Right ventricle myocardium inferior (tissue), 1 donor: ENCODE measurements at regions of chr6 and their contacts with region 1.

Region 1: GRCh38 chr6:124002377-124003081 is 198.9 kb downstream of the NKAIN2 start:
- DNase-seq: no peak
- ATAC-seq: peak; percentile 93

Region 2: DNA sequence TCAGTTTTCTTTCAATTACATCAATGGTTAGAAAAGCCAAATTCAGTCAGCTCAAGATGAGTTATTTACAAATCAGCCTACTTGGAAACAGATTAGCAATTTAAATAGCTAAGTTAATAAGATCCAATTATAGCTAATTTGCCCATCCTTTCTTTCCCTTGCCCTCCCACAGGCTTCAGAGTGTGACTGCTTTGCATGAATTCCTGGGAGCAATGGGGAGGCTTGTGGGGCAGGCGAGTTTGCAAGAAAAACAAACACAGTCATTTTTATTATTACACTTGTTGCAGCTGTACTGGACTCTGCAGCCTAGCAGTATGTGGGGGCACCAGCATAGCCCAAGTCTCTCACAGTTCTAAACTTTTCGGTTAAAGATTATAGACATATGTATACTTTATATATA is 20.1 kb after region 1 on chr6:
- intact Hi-C with region 1: loop called (anchors 1 kb)
- DNase-seq: no peak
- ATAC-seq: no peak